CD14-positive monocyte (primary cell): ENCODE measurements at regions of chr6 and their contacts with region 1.

Region 1: GRCh38 chr6:107957909-107958688 is at the start of gene SEC63:
- DNase-seq: peak; percentile 95 to 97 (median 96)
- H3K4me3 ChIP-seq: peak within 1 kb of the TSS; percentile 80 to 93 (median 90)
- H3K4me3 Mint-ChIP-seq: peak within 1 kb of the TSS; percentile 97 to 100
- H3K27ac ChIP-seq: peak within 1 kb of the TSS; percentile 91 to 95
- H3K27ac Mint-ChIP-seq: peak within 1 kb of the TSS; percentile 96 to 98 (median 98)
- H3K4me1 ChIP-seq: peaks cover 16 to 23% of the 10 kb centered on the region in 2 donors
- H3K4me1 Mint-ChIP-seq: peaks cover 30% of the 10 kb centered on the region
- H3K27me3 ChIP-seq: peaks cover 0 to 3% of the 10 kb centered on the region in 2 donors
- H3K27me3 Mint-ChIP-seq: peaks cover 6 to 9% (median 8%) of the 10 kb centered on the region in 3 donors
- CTCF ChIP-seq: no peak
- polyA plus RNA-seq, gene SEC63: 12.0 to 33.7 (median 12.7) TPM

Region 2: DNA sequence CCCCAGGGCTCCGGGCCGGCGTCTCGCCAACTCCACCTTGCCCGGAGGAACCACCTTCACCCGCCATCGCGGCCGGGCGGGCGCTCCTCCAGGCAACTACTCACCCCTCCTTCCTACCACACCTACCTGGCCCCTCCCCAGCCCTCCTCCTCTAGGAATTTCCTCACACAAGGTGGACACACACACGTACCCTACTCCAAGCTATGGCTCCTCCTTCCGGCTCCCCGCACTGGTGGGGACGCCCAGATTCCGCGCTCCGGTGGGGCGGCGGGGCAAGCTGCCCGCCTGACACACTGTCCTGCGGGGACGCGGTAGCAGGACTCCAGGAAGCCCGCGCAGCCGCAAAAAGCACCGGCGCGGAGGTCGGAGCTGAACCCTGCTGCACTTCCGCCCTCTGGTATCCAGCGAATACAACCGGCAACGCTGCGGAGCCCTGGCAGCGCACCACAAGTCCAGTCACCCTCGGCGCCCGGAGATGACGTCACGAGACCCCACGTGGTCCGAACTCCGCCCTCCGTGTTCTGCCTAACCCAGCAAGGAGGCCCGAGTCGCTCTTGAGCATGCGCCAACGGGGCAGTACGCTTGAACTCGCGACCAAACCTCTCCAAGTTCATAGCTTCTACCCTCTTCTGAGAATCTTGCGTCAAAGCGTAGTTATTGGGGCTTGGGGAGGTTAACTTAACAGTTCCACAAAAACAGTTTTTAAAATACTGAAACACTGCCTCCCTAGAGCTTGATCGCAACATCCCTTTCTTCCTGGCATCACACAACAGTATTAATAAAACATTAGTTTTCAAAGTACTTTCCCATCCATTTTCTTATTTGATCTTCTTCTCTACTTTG is 1632.5 kb before region 1 on chr6 and contains the start of gene ATG5:
- intact Hi-C with region 1: loop called in 1 of 2 experiments (anchors 10 kb)
- DNase-seq: peak; percentile 99 to 100 (median 99)
- H3K4me3 ChIP-seq: peak within 1 kb of the TSS; percentile 92 to 99 (median 93)
- H3K4me3 Mint-ChIP-seq: peak within 1 kb of the TSS; percentile 98
- H3K27ac ChIP-seq: peak within 1 kb of the TSS; percentile 94 to 100
- H3K27ac Mint-ChIP-seq: peak within 1 kb of the TSS; percentile 95 to 99 (median 98)
- H3K4me1 ChIP-seq: peaks cover 15 to 25% of the 10 kb centered on the region in 2 donors
- H3K4me1 Mint-ChIP-seq: peaks cover 26% of the 10 kb centered on the region
- H3K27me3 ChIP-seq: peaks cover 2 to 3% of the 10 kb centered on the region in 2 donors
- H3K27me3 Mint-ChIP-seq: peaks cover 5 to 19% (median 13%) of the 10 kb centered on the region in 3 donors
- CTCF ChIP-seq: no peak
- polyA plus RNA-seq, gene ATG5: 15.0 to 31.4 (median 29.9) TPM

Region 3: DNA sequence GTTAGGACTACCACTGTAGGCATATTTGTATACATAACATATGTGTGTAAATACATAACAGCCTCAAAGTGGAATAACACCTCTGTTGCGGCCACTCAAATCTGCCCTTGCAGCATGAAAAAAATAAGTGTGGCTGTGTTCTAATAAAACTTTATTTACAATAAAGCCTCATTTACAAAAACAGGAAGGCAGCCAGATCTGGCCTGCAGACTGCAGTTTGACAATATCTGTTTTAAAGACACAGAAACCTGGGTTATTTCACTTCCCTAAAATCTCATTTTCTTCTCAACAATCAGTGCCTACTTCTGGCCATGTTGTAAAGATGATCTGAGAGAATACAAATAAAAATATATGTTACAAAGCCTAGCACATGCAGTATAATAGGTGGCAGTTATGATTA is 80.1 kb before region 1 on chr6:
- intact Hi-C with region 1: no loop called
- DNase-seq: peak in 2 of 3 donors; percentile 4 to 5
- H3K4me3 ChIP-seq: no peak overlapping the region
- H3K4me3 Mint-ChIP-seq: no peak overlapping the region
- H3K27ac ChIP-seq: no peak overlapping the region
- H3K27ac Mint-ChIP-seq: no peak overlapping the region
- H3K4me1 ChIP-seq: no peaks in the 10 kb centered on the region
- H3K4me1 Mint-ChIP-seq: peaks cover 5% of the 10 kb centered on the region
- H3K27me3 ChIP-seq: no peaks in the 10 kb centered on the region
- H3K27me3 Mint-ChIP-seq: peaks cover 0 to 1% (median 0%) of the 10 kb centered on the region in 3 donors
- CTCF ChIP-seq: no peak

Region 4: GRCh38 chr6:108074359-108075144 is 116.5 kb after region 1 on chr6 and contains the start of gene OSTM1:
- intact Hi-C with region 1: loop called (anchors 5 to 10 kb)
- DNase-seq: peak; percentile 84 to 91 (median 86)
- H3K4me3 ChIP-seq: peak within 1 kb of the TSS; percentile 86 to 97 (median 95)
- H3K4me3 Mint-ChIP-seq: peak within 1 kb of the TSS; percentile 87 to 93
- H3K27ac ChIP-seq: peak within 1 kb of the TSS; percentile 73 to 96
- H3K27ac Mint-ChIP-seq: peak within 1 kb of the TSS; percentile 78 to 92 (median 90)
- H3K4me1 ChIP-seq: peaks cover 17 to 26% of the 10 kb centered on the region in 2 donors
- H3K4me1 Mint-ChIP-seq: peaks cover 27% of the 10 kb centered on the region
- H3K27me3 ChIP-seq: no peaks in the 10 kb centered on the region
- H3K27me3 Mint-ChIP-seq: peaks cover under 1 to 7% (median 3%) of the 10 kb centered on the region in 3 donors
- CTCF ChIP-seq: no peak
- polyA plus RNA-seq, gene OSTM1: 13.4 to 60.1 (median 49.7) TPM